ENCODE measurements at regions of chr4 and their contacts with region 1.

Region 1: GRCh38 chr4:158809611-158810486 is 41.0 kb downstream of the FNIP2 start:
- DNase-seq: no peak
- H3K4me3 Mint-ChIP-seq: peak overlapping the region; percentile 36
- H3K27ac Mint-ChIP-seq: peak overlapping the region; percentile 64
- H3K4me1 Mint-ChIP-seq: peaks cover 46% of the 10 kb centered on the region
- H3K27me3 Mint-ChIP-seq: no peaks in the 10 kb centered on the region

Region 2: GRCh38 chr4:158768555-158769174 is 41.2 kb before region 1 on chr4 and contains the start of gene FNIP2:
- CTCF ChIA-PET with region 1: no interaction called
- POLR2A ChIA-PET with region 1: interaction called, 5 read pairs
- intact Hi-C with region 1: loop called (anchors 2 kb)
- DNase-seq: peak; percentile 73
- H3K4me3 Mint-ChIP-seq: peak within 1 kb of the TSS; percentile 100
- H3K27ac Mint-ChIP-seq: peak within 1 kb of the TSS; percentile 91
- H3K4me1 Mint-ChIP-seq: peaks cover 43% of the 10 kb centered on the region
- H3K27me3 Mint-ChIP-seq: peaks cover 2% of the 10 kb centered on the region
- total RNA-seq, gene FNIP2: 17.7 to 19.4 TPM

Region 3: DNA sequence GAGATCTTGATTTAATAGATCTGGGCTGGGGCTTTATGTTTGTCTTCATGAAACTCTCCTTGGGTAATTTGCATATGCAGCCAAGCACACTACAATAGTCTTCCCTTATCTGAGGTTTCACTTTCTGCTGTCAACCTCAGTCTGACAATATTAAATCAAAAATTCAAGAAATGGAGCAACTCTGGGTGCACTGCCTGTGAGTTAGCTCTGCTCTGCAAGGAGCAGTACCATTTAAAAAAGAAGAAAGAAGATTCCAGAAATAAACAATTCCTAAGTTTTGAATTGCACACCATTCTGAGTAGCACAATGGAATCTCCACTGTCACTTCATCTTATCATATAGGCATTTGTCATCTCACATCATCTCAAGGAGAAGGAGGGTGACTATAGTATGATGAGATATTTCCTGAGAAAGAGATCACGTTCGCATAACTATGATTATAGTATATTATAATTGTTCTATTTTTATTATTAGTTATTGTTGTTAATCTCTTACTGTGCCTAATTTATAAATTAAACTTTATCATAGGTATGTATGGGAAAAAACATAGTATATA is 31.6 kb before region 1 on chr4:
- CTCF ChIA-PET with region 1: no interaction called
- POLR2A ChIA-PET with region 1: interaction called, 3 read pairs
- intact Hi-C with region 1: loop called (anchors 2 kb)
- DNase-seq: no peak
- H3K4me3 Mint-ChIP-seq: peak overlapping the region; percentile 1
- H3K27ac Mint-ChIP-seq: peak overlapping the region; percentile 32
- H3K4me1 Mint-ChIP-seq: peaks cover 40% of the 10 kb centered on the region
- H3K27me3 Mint-ChIP-seq: no peaks in the 10 kb centered on the region

Region 4: DNA sequence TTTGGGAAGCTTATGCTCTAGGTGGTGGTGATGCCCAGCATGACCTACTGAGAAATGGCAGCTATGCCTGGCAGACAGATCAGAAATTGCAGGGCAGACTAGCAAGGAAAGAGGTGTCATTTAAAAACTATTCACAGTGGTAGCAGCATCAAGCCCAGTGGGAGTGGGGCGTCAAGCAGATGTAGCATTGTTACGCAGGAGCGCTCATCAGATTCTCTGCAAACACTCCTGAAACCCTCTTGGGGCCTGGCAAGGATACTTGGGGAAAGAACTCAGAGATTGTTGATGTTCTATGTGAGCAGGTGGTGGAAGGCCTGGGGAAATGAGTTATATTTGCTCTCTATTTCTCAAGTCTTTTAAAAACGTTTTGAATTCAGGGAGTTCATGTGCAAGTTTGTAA is 730.7 kb after region 1 on chr4:
- CTCF ChIA-PET with region 1: no interaction called
- POLR2A ChIA-PET with region 1: no interaction called
- intact Hi-C with region 1: no loop called
- DNase-seq: no peak
- H3K4me3 Mint-ChIP-seq: no peak overlapping the region
- H3K27ac Mint-ChIP-seq: no peak overlapping the region
- H3K4me1 Mint-ChIP-seq: no peaks in the 10 kb centered on the region
- H3K27me3 Mint-ChIP-seq: no peaks in the 10 kb centered on the region